Ascending aorta (tissue), 2 donors: ENCODE measurements at regions of chr13 and their contacts with region 1.

Region 1: GRCh38 chr13:111239764-111240670 is 80.4 kb upstream of the TEX29 start:
- DNase-seq: no peak
- H3K4me3 ChIP-seq: no peak overlapping the region
- H3K27ac ChIP-seq: no peak overlapping the region
- H3K4me1 ChIP-seq: no peaks in the 10 kb centered on the region
- H3K27me3 ChIP-seq: no peaks in the 10 kb centered on the region
- CTCF ChIP-seq: no peak

Region 2: DNA sequence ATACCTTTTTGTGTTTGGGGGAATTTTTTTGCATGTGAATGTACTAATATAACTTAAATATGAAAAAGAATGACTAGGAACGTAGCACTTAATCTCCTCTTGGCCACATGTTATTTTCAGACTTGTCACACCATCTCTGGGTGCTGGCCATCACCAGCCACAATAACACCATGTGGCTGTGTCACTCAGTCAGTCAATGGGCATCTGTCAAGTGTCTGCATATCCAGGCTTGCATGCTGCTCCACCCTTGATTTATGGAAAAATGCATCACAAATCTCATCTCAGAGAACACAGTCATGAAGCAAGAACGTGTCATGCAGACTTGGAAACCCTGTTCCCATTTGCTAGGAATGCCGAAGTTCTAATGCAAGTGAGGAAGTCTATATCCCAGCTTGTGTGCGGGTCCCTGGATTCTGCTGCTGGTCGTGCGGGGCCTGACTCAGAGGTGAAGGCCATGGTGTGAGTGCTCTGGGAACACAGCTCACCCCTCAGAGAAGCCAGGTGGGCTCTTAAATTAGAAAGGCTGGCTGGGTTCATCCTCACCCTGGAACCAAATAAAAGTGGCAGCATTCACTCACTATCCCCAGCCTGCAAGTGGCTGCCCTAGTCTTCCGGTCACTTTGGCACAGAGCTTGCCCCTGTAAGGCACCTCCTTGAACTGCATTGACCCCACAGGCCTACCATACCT is 178.5 kb before region 1 on chr13:
- intact Hi-C with region 1: loop called (anchors 5 kb)
- DNase-seq: no peak
- H3K4me3 ChIP-seq: no peak overlapping the region
- H3K27ac ChIP-seq: no peak overlapping the region
- H3K4me1 ChIP-seq: no peaks in the 10 kb centered on the region
- H3K27me3 ChIP-seq: no peaks in the 10 kb centered on the region
- CTCF ChIP-seq: no peak